ENCODE measurements at regions of chr11 and their contacts with region 1.

Region 1: GRCh38 chr11:4960877-4961276 is 5.4 kb upstream of the OR51A2 start:
- DNase-seq: no peak
- H3K4me3 Mint-ChIP-seq: no peak overlapping the region
- H3K27ac Mint-ChIP-seq: no peak overlapping the region
- H3K4me1 Mint-ChIP-seq: no peaks in the 10 kb centered on the region
- H3K27me3 Mint-ChIP-seq: no peaks in the 10 kb centered on the region

Region 2: DNA sequence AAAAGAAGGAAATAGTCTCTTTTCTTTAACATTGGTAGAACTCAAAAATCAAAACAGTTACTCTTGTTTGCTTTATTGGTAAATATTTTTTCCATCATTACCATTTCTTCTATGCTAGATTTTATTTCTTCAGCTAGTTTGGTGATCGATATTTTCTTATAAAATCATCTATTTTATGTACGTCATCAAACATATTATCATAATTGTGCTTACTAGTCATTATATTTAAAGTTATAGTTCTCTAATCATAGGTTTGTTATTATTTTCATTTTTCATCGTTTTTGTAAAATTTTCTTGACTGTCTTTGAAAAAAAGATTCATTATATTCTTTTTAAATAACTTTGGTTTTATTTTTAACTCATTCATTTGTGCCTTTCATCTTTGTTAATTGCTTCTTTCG is 142.7 kb before region 1 on chr11:
- intact Hi-C with region 1: no loop called
- DNase-seq: no peak
- H3K4me3 Mint-ChIP-seq: no peak overlapping the region
- H3K27ac Mint-ChIP-seq: no peak overlapping the region
- H3K4me1 Mint-ChIP-seq: no peaks in the 10 kb centered on the region
- H3K27me3 Mint-ChIP-seq: no peaks in the 10 kb centered on the region

Region 3: DNA sequence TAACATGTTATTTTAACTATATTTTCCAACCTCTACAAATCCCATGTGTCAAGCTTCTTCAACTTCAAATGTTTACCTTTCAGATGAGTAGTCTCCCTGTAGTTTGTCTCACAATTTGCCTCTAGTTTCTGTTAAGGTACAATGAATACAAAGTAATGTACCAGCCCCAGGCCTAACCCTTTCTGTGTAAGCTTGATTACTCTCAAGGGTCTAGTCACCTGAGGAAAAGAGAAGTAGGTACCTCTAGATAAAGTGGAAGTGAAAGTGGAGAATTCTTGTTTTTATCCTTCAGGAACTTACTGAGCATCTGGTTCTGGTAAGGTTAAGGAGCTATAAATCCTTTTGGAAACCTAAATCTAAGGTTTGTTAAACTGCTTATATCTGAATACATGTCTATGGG is 57.4 kb before region 1 on chr11 and contains the start of gene OR51A7:
- intact Hi-C with region 1: no loop called
- DNase-seq: no peak
- H3K4me3 Mint-ChIP-seq: no peak within 1 kb of the TSS
- H3K27ac Mint-ChIP-seq: no peak within 1 kb of the TSS
- H3K4me1 Mint-ChIP-seq: no peaks in the 10 kb centered on the region
- H3K27me3 Mint-ChIP-seq: no peaks in the 10 kb centered on the region
- total RNA-seq, gene OR51A7: not detected in 2 replicates

Region 4: GRCh38 chr11:4926608-4927007 is 34.3 kb before region 1 on chr11:
- intact Hi-C with region 1: no loop called
- DNase-seq: no peak
- H3K4me3 Mint-ChIP-seq: no peak overlapping the region
- H3K27ac Mint-ChIP-seq: no peak overlapping the region
- H3K4me1 Mint-ChIP-seq: no peaks in the 10 kb centered on the region
- H3K27me3 Mint-ChIP-seq: no peaks in the 10 kb centered on the region

Region 5: GRCh38 chr11:4947505-4947904 is 13.4 kb before region 1 on chr11 and contains the start of gene OR51A4:
- intact Hi-C with region 1: loop called (anchors 1 kb)
- DNase-seq: no peak
- H3K4me3 Mint-ChIP-seq: no peak within 1 kb of the TSS
- H3K27ac Mint-ChIP-seq: no peak within 1 kb of the TSS
- H3K4me1 Mint-ChIP-seq: no peaks in the 10 kb centered on the region
- H3K27me3 Mint-ChIP-seq: no peaks in the 10 kb centered on the region
- total RNA-seq, gene OR51A4: not detected in 2 replicates

Measured in activated CD4-positive, alpha-beta T cell treated with anti-CD3 and anti-CD28 coated beads, Interleukin-2, amount 10 ng/mL, durations not matched to agents 24 days and 14 days (primary cell).